OCI-LY7 (cell line): ENCODE measurements at regions of chr6 and their contacts with region 1.

Region 1: GRCh38 chr6:131717832-131718542 is 7.2 kb upstream of the CTAGE9 start:
- DNase-seq: no peak
- H3K4me3 ChIP-seq: no peak overlapping the region
- H3K27ac ChIP-seq: no peak overlapping the region
- H3K4me1 ChIP-seq: no peaks in the 10 kb centered on the region
- CTCF ChIP-seq: no peak

Region 2: DNA sequence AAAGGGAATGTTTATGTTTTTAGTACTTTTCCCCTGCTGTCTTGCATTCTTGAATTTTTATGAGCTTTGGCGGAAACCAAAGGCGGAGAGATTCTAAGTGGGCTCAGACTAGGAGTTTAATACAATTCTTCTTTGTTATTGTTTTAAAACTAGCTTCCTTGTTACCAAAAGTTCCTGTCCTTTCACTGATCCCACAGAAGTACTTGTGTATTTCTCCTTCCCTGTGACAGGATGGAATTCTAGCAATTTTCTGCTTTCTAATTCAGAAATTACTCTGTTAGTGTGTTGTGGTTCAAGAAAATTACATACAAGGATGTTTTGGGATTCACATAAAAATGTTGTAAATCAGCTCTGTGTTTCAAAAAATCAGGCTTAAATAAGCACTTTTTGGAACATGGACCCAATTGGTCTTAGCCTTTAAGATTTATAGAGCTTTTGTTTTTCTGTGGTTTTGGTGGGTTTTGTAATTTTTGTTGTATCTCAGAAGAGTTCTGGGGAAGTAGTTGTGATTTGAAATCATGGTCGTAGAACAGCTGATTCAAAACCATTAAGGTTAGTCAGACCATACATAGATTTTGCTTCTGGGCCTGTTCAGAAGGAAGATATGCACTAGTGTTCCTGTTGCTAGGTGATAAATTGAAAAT is 10.4 kb after region 1 on chr6:
- CTCF ChIA-PET with region 1: no interaction called
- POLR2A ChIA-PET with region 1: interaction called, 11 read pairs
- intact Hi-C with region 1: no loop called
- DNase-seq: no peak
- H3K4me3 ChIP-seq: no peak overlapping the region
- H3K27ac ChIP-seq: no peak overlapping the region
- H3K4me1 ChIP-seq: no peaks in the 10 kb centered on the region
- CTCF ChIP-seq: no peak